ENCODE measurements at regions of chr20 and their contacts with region 1.

Region 1: GRCh38 chr20:5569021-5569420 is 181.2 kb upstream of the SHLD1 start:
- DNase-seq: peak; percentile 52
- H3K4me3 ChIP-seq: no peak overlapping the region
- H3K27ac ChIP-seq: no peak overlapping the region
- H3K4me1 ChIP-seq: no peaks in the 10 kb centered on the region
- H3K27me3 ChIP-seq: no peaks in the 10 kb centered on the region
- CTCF ChIP-seq: peak; percentile 68
- EP300 ChIP-seq: no peak
- RAD21 ChIP-seq: peak; percentile 87

Region 2: DNA sequence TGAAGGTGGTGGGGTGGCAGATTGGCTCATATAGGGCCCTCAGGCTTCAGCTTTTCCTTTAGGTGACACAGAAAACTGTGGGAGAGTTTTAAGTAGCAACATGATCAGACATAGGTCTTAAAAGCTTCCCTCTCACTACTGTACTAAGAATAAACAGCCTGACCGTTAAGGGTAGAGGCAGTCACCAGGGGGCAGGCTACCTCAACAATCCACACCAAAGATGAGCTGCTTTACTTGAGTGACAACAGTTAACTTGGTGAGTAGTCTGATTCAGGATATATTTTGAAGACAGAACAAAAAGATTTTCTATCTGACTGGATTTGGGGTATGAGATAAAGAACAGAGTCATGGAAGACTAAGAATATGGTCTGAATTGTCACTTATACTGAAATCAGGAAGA is 11.9 kb before region 1 on chr20:
- CTCF ChIA-PET with region 1: interaction called, 24 read pairs
- POLR2A ChIA-PET with region 1: no interaction called
- DNase-seq: peak; percentile 54
- H3K4me3 ChIP-seq: no peak overlapping the region; a peak in 1 of 4 replicates
- H3K27ac ChIP-seq: no peak overlapping the region
- H3K4me1 ChIP-seq: no peaks in the 10 kb centered on the region
- H3K27me3 ChIP-seq: no peaks in the 10 kb centered on the region
- CTCF ChIP-seq: peak; percentile 72
- EP300 ChIP-seq: no peak
- RAD21 ChIP-seq: peak; percentile 74

Region 3: DNA sequence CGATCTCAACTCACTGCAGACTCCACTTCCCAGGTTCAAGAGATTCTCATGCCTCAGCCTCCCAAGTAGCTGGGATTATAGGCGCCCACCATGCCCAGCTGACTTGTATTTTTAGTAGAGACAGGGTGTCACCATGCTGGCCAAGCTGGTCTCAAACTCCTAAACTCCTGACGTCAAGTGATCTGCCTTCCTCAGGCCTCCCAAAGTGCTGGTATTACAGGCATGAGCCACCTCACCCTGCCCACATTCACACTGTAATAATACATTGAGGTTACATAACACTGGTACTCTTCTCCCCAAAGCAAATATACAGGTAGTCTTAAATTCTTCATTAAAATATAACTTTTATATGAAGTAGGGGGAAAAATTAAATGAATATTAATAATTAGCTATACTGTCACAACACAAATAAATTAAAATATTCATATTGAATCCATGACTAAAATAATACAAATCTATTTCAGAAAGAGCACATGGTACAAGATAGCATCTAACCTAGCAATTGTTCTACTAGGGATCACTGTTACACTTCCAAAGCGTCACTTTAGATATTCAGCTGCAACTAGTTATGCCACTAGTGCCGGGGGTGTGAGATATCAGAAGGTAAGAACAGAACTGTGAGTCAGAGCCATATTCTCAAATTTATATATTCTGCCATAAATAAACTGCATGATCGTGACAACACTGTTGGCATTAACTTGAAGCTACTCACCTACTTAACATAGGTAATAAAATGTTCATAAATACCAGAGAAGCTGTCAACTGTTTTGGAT is 12.1 kb after region 1 on chr20:
- CTCF ChIA-PET with region 1: interaction called, 17 read pairs
- POLR2A ChIA-PET with region 1: no interaction called
- DNase-seq: no peak
- H3K4me3 ChIP-seq: no peak overlapping the region
- H3K27ac ChIP-seq: no peak overlapping the region
- H3K4me1 ChIP-seq: no peaks in the 10 kb centered on the region
- H3K27me3 ChIP-seq: no peaks in the 10 kb centered on the region
- CTCF ChIP-seq: no peak
- EP300 ChIP-seq: no peak
- RAD21 ChIP-seq: no peak